Left cardiac atrium (tissue), 4 donors: ENCODE measurements at regions of chr11 and their contacts with region 1.

Region 1: GRCh38 chr11:3947061-3947460 is 91.6 kb downstream of the STIM1 start:
- DNase-seq: no peak
- ATAC-seq: peak; percentile 89 to 92

Region 2: GRCh38 chr11:3753110-3753509 is 194.0 kb before region 1 on chr11:
- intact Hi-C with region 1: no loop called
- DNase-seq: no peak
- ATAC-seq: no peak

Region 3: GRCh38 chr11:3867209-3868091 is 79.6 kb before region 1 on chr11:
- intact Hi-C with region 1: loop called in 1 of 2 experiments (anchors 5 kb)
- DNase-seq: peak; percentile 48
- ATAC-seq: peak; percentile 88 to 91

Region 4: GRCh38 chr11:3905080-3905953 is 41.7 kb before region 1 on chr11:
- intact Hi-C with region 1: no loop called
- DNase-seq: no peak
- ATAC-seq: peak; percentile 63 to 65

Region 5: DNA sequence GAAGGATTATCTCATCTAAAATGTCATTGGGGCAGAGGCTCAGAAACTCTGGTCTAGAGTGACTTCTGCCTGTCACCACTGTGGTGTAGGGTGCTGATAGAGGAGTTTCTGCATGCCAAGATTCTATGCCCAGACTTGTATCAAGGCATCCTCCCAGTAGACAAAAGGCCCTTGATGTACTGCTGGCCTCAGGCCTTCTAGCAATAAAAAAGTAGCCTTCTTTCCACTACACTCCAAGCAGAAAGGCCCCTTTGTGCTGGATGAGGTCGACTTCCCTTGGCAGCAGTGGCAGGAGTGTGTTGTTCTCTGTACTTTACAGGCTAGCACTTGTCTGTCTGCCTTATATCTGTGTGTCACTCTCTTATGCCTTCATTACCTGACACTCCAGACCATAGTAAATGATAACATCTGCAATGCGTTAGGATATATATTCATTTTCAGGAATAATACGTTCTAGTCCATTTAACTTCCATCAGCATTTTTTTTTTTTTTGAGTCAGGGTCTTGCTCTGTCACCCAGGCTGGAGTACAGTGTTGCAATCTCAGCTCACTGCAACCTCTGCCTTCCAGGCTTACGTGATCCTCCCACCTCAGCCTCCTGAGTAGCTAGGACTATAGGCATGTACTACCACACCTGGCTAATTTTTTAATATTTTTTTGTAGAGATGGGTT is 98.0 kb after region 1 on chr11:
- intact Hi-C with region 1: loop called in 1 of 2 experiments (anchors 10 kb)
- DNase-seq: peak; percentile 30
- ATAC-seq: peak; percentile 45 to 65

Region 6: DNA sequence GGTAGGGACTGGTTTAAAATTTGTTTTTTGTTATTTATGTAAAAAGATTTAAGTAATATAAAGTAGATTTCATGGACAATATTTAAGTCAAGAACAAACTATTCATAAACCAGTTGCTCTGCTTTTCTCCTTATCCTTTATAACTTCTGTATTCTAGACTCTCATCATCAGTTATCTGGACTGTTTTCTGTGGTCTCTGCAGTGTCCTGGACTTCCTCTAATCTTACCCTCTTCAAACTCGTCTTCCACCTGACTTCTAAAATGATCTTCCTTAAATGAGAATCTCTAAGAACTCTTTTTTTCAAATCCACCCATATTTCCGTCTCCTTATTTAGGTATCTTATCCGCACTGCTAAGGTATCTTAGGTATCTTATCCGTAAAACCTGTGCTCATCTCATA is 155.7 kb after region 1 on chr11:
- intact Hi-C with region 1: no loop called
- DNase-seq: no peak
- ATAC-seq: no peak